AG04450 (cell line): ENCODE measurements at regions of chr11 and their contacts with region 1.

Region 1: GRCh38 chr11:78504181-78504580 is 70.5 kb downstream of the NARS2 start:
- DNase-seq: no peak
- H3K4me3 ChIP-seq: no peak overlapping the region
- H3K27ac ChIP-seq: no peak overlapping the region
- H3K27me3 ChIP-seq: no peaks in the 10 kb centered on the region
- CTCF ChIP-seq: no peak

Region 2: GRCh38 chr11:78268591-78269410 is 235.4 kb before region 1 on chr11:
- CTCF ChIA-PET with region 1: interaction called, 10 read pairs
- POLR2A ChIA-PET with region 1: no interaction called
- DNase-seq: no peak
- H3K4me3 ChIP-seq: no peak overlapping the region
- H3K27ac ChIP-seq: no peak overlapping the region
- H3K27me3 ChIP-seq: no peaks in the 10 kb centered on the region
- CTCF ChIP-seq: no peak

Region 3: DNA sequence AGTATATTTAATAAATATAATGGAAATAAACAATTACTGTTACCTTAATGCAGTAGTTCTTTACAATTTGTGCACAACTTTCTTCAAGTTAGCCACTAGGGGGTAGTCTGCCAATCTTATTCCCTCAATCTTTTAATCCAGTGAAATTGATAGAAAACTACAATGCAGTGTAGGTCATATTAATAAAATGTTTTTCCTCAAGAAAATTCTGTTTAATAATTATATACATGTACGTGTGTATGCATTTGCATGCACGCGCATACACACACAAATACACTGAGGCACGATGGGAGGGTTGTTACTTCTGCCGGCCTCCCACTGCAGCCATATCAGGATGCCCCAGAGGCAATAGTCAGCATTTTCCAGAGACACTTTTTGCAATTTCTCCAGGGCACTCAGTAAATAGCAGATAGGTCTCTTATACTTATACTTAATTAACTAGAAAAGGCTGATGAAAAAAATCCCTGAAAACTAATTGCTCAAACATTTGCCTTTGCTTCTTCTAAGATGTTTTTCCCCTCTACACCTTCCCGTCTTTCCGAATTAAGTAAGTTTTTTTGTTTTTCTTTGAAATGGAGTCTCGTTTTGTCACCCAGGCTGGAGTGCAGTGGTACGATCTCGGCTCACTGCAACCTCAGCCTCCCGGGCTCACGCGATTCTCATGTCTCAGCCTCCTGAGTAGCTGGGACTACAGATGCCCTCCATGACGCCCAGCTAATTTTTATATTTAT is 89.7 kb before region 1 on chr11:
- CTCF ChIA-PET with region 1: no interaction called
- POLR2A ChIA-PET with region 1: no interaction called
- DNase-seq: no peak
- H3K4me3 ChIP-seq: no peak overlapping the region
- H3K27ac ChIP-seq: no peak overlapping the region
- H3K27me3 ChIP-seq: no peaks in the 10 kb centered on the region
- CTCF ChIP-seq: peak; percentile 70

Region 4: GRCh38 chr11:78478536-78478935 is 25.6 kb before region 1 on chr11:
- CTCF ChIA-PET with region 1: no interaction called
- POLR2A ChIA-PET with region 1: no interaction called
- DNase-seq: no peak
- H3K4me3 ChIP-seq: no peak overlapping the region
- H3K27ac ChIP-seq: no peak overlapping the region
- H3K27me3 ChIP-seq: no peaks in the 10 kb centered on the region
- CTCF ChIP-seq: no peak

Region 5: GRCh38 chr11:79219191-79219590 is 715.0 kb after region 1 on chr11:
- CTCF ChIA-PET with region 1: no interaction called
- POLR2A ChIA-PET with region 1: no interaction called
- DNase-seq: no peak
- H3K4me3 ChIP-seq: no peak overlapping the region
- H3K27ac ChIP-seq: no peak overlapping the region
- H3K27me3 ChIP-seq: no peaks in the 10 kb centered on the region
- CTCF ChIP-seq: no peak